ENCODE measurements at regions of chr22 and their contacts with region 1.

Region 1: DNA sequence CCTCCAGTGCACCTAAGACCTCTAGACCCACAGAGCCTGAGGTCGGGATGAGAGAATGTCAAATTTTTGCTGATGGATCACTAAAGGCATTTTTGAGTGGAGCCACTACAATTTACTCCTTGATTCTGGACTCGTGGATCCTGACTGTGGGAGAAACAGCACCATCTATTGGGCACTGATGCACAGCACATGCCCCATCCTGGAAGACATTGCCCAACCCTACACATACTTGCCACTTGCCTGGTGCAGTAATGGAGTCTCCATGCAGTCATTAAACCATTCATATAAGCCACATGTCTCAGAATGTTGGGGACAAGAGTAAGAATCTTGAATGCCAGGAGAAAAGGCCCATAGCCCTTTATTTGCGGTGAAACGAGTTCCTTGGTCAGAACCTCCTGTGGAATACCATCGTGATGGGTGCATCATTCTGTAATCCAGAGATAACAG is 103.9 kb downstream of the GGTLC2 start:
- DNase-seq: no peak
- ATAC-seq: peak; percentile 35
- H3K4me3 Mint-ChIP-seq: no peak overlapping the region
- H3K27ac Mint-ChIP-seq: peak overlapping the region; percentile 18
- H3K4me1 Mint-ChIP-seq: peaks cover 48% of the 10 kb centered on the region
- H3K27me3 Mint-ChIP-seq: no peaks in the 10 kb centered on the region
- CTCF ChIP-seq: peak; percentile 24

Region 2: GRCh38 chr22:22527312-22527711 is 221.0 kb before region 1 on chr22:
- CTCF ChIA-PET with region 1: no interaction called
- POLR2A ChIA-PET with region 1: no interaction called
- intact Hi-C with region 1: no loop called
- DNase-seq: no peak
- ATAC-seq: no peak
- H3K4me3 Mint-ChIP-seq: no peak overlapping the region
- H3K27ac Mint-ChIP-seq: no peak overlapping the region
- H3K4me1 Mint-ChIP-seq: peaks cover 10% of the 10 kb centered on the region
- H3K27me3 Mint-ChIP-seq: peaks cover 5% of the 10 kb centered on the region
- CTCF ChIP-seq: no peak

Region 3: GRCh38 chr22:22666307-22667091 is 81.8 kb before region 1 on chr22:
- CTCF ChIA-PET with region 1: interaction called, 23 read pairs
- POLR2A ChIA-PET with region 1: no interaction called
- intact Hi-C with region 1: no loop called
- DNase-seq: peak; percentile 30
- ATAC-seq: peak; percentile 82
- H3K4me3 Mint-ChIP-seq: no peak overlapping the region
- H3K27ac Mint-ChIP-seq: no peak overlapping the region
- H3K4me1 Mint-ChIP-seq: peaks cover 16% of the 10 kb centered on the region
- H3K27me3 Mint-ChIP-seq: peaks cover 2% of the 10 kb centered on the region
- CTCF ChIP-seq: no peak

Region 4: DNA sequence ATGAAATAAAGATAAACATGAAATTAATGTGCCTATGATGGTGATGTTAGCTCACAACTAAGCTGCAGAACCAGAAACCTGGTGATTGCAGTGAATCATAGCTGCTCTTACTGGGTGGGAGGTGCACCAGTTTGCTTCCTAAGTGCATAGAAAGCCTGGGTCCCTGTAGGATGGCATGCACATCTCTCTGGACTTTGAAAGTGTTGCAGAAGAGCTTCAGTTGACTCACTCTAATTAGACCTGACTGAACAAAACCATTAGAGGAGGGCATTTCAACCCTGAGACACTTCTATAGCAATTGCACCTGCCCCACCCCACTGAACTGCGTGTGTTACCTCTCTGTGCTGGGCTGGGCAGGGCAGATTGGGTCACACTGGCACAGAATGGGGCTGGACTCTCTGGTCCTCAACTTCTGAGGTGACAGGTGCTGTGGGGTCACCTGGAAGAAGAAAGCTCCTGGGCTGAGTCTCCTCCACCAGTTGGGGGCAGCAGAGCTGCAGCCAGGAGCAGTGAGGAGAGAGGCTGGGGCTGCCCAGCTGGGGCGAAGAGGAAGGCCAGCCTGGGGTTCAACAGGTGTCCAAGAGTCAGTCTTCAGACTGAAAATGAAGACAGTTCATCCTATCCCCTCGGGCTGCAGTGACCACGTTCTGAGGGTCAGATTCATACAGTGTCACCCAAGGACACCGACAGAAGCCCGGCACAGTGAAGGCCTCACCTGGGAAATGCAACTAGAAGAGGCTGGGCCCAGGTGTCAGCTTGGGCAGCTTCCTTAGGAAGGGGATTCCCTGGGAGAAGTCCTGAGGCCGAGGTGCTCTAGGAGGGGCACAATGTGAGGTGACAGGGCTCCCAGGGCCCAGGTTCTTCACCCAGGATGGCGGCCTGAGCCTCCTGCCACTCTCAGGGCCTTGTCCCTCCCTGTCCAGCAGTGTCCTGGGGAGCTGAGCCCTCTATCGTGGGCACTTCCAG is 45.8 kb before region 1 on chr22:
- CTCF ChIA-PET with region 1: interaction called, 12 read pairs
- POLR2A ChIA-PET with region 1: no interaction called
- intact Hi-C with region 1: no loop called
- DNase-seq: no peak
- ATAC-seq: peak; percentile 49
- H3K4me3 Mint-ChIP-seq: no peak overlapping the region
- H3K27ac Mint-ChIP-seq: no peak overlapping the region
- H3K4me1 Mint-ChIP-seq: peaks cover 17% of the 10 kb centered on the region
- H3K27me3 Mint-ChIP-seq: no peaks in the 10 kb centered on the region
- CTCF ChIP-seq: no peak

Region 5: GRCh38 chr22:22710719-22711531 is 37.4 kb before region 1 on chr22:
- CTCF ChIA-PET with region 1: interaction called, 11 read pairs
- POLR2A ChIA-PET with region 1: no interaction called
- intact Hi-C with region 1: loop called (anchors 5 kb)
- DNase-seq: peak; percentile 70
- ATAC-seq: peak; percentile 55
- H3K4me3 Mint-ChIP-seq: no peak overlapping the region
- H3K27ac Mint-ChIP-seq: peak overlapping the region; percentile 24
- H3K4me1 Mint-ChIP-seq: peaks cover 49% of the 10 kb centered on the region
- H3K27me3 Mint-ChIP-seq: no peaks in the 10 kb centered on the region
- CTCF ChIP-seq: no peak

Region 6: DNA sequence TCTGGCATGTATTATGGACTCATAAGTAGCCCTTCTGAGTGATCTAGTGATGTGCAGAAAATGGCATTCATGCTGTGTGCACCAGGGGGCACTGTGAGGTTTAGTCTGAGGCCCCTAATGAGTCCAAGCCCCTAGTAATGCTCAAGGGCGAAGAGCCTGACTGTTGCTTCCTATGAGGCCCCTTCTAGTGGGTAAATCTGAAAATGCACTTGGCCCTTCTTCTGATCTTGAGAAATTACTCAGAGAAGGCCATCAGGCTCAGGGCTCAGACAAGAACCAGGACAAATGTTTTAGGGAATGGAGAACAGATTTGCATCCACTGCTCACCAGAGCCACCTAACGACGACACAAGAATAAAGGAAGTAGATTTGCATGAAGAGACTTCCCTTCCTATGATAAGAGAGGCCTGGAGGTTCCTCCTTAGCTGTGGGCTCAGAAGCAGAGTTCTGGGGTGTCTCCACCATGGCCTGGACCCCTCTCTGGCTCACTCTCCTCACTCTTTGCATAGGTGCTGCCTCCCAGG is 28.1 kb before region 1 on chr22:
- CTCF ChIA-PET with region 1: interaction called, 56 read pairs
- POLR2A ChIA-PET with region 1: interaction called, 9 read pairs
- intact Hi-C with region 1: loop called (anchors 1 kb)
- DNase-seq: peak; percentile 41
- ATAC-seq: peak; percentile 68
- H3K4me3 Mint-ChIP-seq: peak overlapping the region; percentile 68
- H3K27ac Mint-ChIP-seq: peak overlapping the region; percentile 94
- H3K4me1 Mint-ChIP-seq: peaks cover 58% of the 10 kb centered on the region
- H3K27me3 Mint-ChIP-seq: no peaks in the 10 kb centered on the region
- CTCF ChIP-seq: no peak